GM12878 (cell line): ENCODE measurements at regions of chr1 and their contacts with region 1.

Region 1: DNA sequence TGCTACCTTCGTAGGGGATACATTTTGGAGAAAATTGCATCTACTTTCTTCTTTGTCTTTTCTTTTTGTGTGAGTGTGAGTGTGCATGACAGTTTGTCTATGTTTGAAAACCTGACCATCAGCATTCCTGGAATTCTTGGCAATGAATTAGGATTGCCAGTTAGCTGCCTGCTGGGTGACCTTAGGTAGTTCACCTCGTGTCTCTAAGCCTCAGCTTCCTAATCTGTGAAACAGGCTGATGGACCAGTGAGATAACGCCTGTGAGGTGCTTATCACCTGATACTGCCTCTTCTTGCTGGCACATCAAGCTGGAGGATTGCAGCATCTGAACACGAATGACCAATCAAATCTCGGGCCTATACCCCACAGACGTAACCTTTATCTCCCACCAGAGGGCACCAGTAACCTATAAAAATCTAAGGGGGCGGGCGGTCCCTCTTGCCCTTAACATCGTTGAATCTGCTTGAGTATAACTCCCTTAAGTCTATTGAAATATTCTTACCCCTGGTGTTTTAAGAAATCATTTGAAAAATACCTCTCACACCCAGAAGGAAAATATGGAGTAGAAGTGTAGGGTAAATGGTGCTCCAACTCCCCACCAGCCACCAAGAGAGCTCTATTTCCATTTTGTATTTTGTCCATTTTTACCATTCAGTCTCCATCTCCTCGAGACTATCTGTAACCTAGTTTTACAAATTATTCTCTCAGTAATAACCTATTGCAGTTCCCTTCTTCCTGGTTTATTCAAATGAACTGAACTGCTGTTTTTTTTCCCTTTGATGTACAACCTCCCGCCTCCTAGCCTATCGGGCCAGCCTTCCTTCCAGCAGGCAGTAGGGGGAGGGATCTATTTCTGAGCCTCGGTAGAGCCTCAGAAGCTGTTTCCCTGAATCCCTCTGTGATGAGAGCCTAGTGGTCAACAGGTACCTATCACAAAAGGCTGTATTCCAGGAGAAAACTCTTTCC is 49.7 kb downstream of the MDM4 start:
- DNase-seq: no peak
- ATAC-seq: peak; percentile 87
- H3K4me3 ChIP-seq: no peak overlapping the region
- H3K27ac ChIP-seq: peak overlapping the region; percentile 45
- H3K4me1 ChIP-seq: peaks cover 24% of the 10 kb centered on the region
- H3K27me3 ChIP-seq: no peaks in the 10 kb centered on the region
- CTCF ChIP-seq: peak; percentile 58 to 78 (median 72)
- EP300 ChIP-seq: no peak
- POLR2A ChIP-seq: no peak
- RAD21 ChIP-seq: peak; percentile 78

Region 2: DNA sequence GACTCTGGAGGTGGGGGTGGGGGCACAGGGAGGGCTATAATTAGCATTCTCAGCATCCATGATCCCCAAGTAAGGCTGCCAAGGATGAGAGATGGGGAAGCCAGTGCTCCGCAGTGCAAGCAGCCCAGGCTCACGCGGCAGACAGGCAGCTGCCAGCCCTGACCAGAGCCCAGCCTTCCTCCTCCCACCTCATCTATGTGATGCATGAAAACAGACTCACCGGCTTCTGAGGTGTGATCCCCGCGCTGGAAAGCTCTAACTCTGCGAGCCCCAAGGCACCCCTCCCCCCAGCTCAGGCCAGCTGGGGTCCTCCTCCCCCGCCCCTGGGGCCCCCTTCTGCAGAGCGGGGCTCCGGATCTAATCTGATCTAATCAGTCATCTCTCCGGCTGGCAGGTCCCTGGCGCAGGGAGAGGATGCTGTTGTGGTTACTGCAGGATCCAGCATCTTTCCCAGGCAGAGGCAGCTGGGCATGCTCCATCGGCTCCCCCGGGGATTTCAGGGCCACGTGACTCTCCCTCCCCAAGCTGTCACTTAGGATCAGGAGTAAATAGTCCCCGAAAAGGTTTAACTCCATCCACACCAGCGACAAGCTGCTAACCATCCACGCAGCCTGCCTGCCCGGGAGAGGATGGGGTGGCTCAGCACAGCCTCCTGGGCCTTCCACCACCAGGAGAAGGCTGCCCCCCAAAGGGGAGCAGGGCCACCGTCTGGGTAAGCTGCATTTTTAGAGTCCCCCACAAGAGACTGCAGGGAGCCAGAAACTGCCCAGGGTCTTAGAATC is 206.2 kb before region 1 on chr1 and contains the start of gene PLEKHA6:
- CTCF ChIA-PET with region 1: no interaction called
- POLR2A ChIA-PET with region 1: no interaction called
- RAD21 ChIA-PET with region 1: no interaction called
- SMC1A ChIA-PET with region 1: no interaction called
- in situ Hi-C with region 1: no loop called
- intact Hi-C with region 1: no loop called
- DNase-seq: no peak
- ATAC-seq: peak; percentile 15
- H3K4me3 ChIP-seq: no peak within 1 kb of the TSS
- H3K27ac ChIP-seq: no peak within 1 kb of the TSS
- H3K4me1 ChIP-seq: peaks cover 11% of the 10 kb centered on the region
- H3K27me3 ChIP-seq: peaks cover 0 to 2% of the 10 kb centered on the region in 2 experiments; a peak in 2 of 4 replicates
- CTCF ChIP-seq: no peak
- EP300 ChIP-seq: no peak
- POLR2A ChIP-seq: no peak
- RAD21 ChIP-seq: no peak
- polyA plus RNA-seq, gene PLEKHA6: not detected

Region 3: DNA sequence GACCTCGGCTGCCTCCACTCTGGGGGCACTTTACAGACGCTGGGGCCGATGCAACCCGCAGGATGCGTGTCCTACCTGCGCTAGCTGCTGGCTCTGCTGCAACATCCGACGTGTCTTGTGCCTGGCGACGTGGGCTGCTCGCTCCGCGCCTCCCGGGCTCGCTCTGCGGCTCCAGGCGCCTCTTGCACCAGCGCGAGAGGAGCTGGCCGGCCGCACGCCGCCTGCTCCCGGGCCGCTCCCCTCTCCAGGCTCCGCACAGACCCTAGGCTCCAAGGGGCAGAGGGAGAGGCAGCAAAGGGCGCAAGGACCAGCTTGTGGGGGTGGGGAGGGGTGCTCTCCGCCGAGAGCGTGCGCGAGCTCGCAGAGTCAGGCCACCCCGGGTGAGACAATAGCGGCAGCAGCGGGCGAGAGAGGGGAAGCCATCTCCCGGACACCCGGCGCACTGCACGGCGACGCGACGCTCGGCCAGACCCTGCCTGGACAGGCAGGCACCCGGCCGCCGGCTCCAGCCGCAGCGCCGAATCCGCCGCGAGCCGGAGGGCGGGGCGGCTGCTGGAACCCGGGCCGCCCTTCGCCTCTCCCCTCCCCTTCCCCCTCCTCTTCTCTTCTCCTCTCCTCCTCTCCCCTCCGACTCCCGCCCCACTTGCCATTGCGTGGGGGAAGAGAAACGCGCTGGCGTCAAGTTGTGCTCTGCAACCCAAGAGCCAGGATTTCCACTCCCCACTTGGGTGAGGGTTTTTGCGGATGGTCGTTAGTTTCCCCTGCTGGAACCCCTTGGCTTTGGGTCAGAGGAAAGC is 71.4 kb before region 1 on chr1 and contains the start of gene PIK3C2B:
- CTCF ChIA-PET with region 1: no interaction called
- POLR2A ChIA-PET with region 1: no interaction called
- RAD21 ChIA-PET with region 1: no interaction called
- SMC1A ChIA-PET with region 1: no interaction called
- in situ Hi-C with region 1: no loop called
- intact Hi-C with region 1: no loop called
- DNase-seq: peak; percentile 55
- ATAC-seq: peak; percentile 92
- H3K4me3 ChIP-seq: peak within 1 kb of the TSS; percentile 92
- H3K27ac ChIP-seq: peak within 1 kb of the TSS; percentile 86
- H3K4me1 ChIP-seq: peaks cover 22% of the 10 kb centered on the region
- H3K27me3 ChIP-seq: no peaks in the 10 kb centered on the region
- CTCF ChIP-seq: peak; percentile 37 to 59 (median 43)
- EP300 ChIP-seq: no peak
- POLR2A ChIP-seq: peak; percentile 86
- RAD21 ChIP-seq: peak; percentile 47
- polyA plus RNA-seq, gene PIK3C2B: 2.2 to 5.0 TPM

Region 4: GRCh38 chr1:204530932-204531331 is 35.0 kb before region 1 on chr1:
- CTCF ChIA-PET with region 1: interaction called, 10 read pairs
- POLR2A ChIA-PET with region 1: interaction called, 3 read pairs
- RAD21 ChIA-PET with region 1: interaction called, 9 read pairs
- SMC1A ChIA-PET with region 1: interaction called, 9 read pairs
- in situ Hi-C with region 1: no loop called
- intact Hi-C with region 1: no loop called
- DNase-seq: peak; percentile 87
- ATAC-seq: peak; percentile 96
- H3K4me3 ChIP-seq: no peak overlapping the region
- H3K27ac ChIP-seq: peak overlapping the region; percentile 59
- H3K4me1 ChIP-seq: peaks cover 23% of the 10 kb centered on the region
- H3K27me3 ChIP-seq: no peaks in the 10 kb centered on the region
- CTCF ChIP-seq: no peak
- EP300 ChIP-seq: peak in 1 of 2 experiments; percentile 94; a peak in 2 of 4 replicates
- POLR2A ChIP-seq: no peak
- RAD21 ChIP-seq: no peak

Region 5: GRCh38 chr1:204623894-204624361 is 58.0 kb after region 1 on chr1:
- CTCF ChIA-PET with region 1: interaction called, 17 read pairs
- POLR2A ChIA-PET with region 1: no interaction called
- RAD21 ChIA-PET with region 1: interaction called, 5 read pairs
- SMC1A ChIA-PET with region 1: interaction called, 5 read pairs
- in situ Hi-C with region 1: no loop called
- intact Hi-C with region 1: no loop called
- DNase-seq: no peak
- ATAC-seq: peak; percentile 76
- H3K4me3 ChIP-seq: no peak overlapping the region
- H3K27ac ChIP-seq: no peak overlapping the region
- H3K4me1 ChIP-seq: no peaks in the 10 kb centered on the region
- H3K27me3 ChIP-seq: no peaks in the 10 kb centered on the region; a peak in 1 of 4 replicates
- CTCF ChIP-seq: peak; percentile 8 to 39 (median 19); a peak in 4 of 6 replicates
- EP300 ChIP-seq: no peak
- POLR2A ChIP-seq: no peak
- RAD21 ChIP-seq: 0 out of 2 replicates have a peak, but pooled peaks have one; percentile 5

Region 6: GRCh38 chr1:204746838-204747442 is 181.0 kb after region 1 on chr1:
- CTCF ChIA-PET with region 1: interaction called, 7 read pairs
- POLR2A ChIA-PET with region 1: no interaction called
- RAD21 ChIA-PET with region 1: interaction called, 8 read pairs
- SMC1A ChIA-PET with region 1: no interaction called
- in situ Hi-C with region 1: no loop called
- intact Hi-C with region 1: loop called (anchors 5 kb)
- DNase-seq: no peak
- ATAC-seq: peak; percentile 94
- H3K4me3 ChIP-seq: no peak overlapping the region
- H3K27ac ChIP-seq: no peak overlapping the region
- H3K4me1 ChIP-seq: no peaks in the 10 kb centered on the region
- H3K27me3 ChIP-seq: peaks cover 0 to 1% of the 10 kb centered on the region in 2 experiments; a peak in 1 of 4 replicates
- CTCF ChIP-seq: peak; percentile 78 to 97 (median 97)
- EP300 ChIP-seq: no peak
- POLR2A ChIP-seq: no peak
- RAD21 ChIP-seq: peak; percentile 48

Region 7: GRCh38 chr1:204941421-204942338 is 375.8 kb after region 1 on chr1:
- CTCF ChIA-PET with region 1: no interaction called
- POLR2A ChIA-PET with region 1: no interaction called
- RAD21 ChIA-PET with region 1: interaction called, 3 read pairs
- SMC1A ChIA-PET with region 1: no interaction called
- in situ Hi-C with region 1: no loop called
- intact Hi-C with region 1: loop called (anchors 10 kb)
- DNase-seq: no peak
- ATAC-seq: peak; percentile 88
- H3K4me3 ChIP-seq: no peak overlapping the region
- H3K27ac ChIP-seq: no peak overlapping the region
- H3K4me1 ChIP-seq: no peaks in the 10 kb centered on the region
- H3K27me3 ChIP-seq: peaks cover 0 to 6% of the 10 kb centered on the region in 2 experiments; a peak in 3 of 4 replicates
- CTCF ChIP-seq: peak; percentile 81 to 95 (median 91)
- EP300 ChIP-seq: no peak
- POLR2A ChIP-seq: no peak
- RAD21 ChIP-seq: peak; percentile 51

Region 8: DNA sequence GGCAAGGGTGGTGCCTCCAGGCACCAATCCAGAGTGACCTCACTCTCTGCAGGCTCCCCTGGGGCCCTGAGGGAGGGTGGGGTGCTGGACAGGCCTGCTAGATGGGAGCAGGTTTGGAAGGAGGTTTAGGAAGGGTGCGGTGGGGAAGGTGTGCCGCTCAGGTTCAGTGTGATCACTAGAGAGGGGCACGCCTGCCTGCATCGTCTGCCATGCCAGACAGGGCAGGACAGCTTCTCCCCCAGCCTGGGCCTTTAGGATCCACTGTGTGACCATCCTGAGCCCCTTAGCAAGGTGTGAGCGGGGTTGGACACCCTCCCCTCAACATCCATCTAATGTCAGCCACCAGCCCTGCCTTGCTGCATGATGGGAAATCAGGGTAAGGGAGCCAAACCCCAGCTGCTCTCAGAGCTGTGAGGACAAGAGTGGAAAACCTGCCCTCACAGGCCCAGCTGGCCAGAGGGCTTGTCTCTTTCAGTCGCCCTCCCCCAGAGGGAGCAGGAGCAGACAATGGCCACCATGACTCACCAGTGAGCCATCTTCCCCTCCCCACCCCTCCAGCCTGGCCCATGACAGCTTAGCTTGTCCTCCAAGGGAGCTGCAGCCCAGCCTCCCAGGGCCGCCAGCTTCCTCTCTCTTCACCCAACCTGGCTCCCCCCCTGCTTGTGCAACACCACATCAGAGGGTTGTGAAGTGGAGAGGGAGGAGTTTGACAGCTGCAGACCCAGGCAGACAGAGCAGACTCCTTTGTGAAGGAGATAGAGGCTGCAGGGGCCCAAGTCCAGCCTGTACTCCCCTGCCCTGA is 718.6 kb after region 1 on chr1:
- CTCF ChIA-PET with region 1: no interaction called
- POLR2A ChIA-PET with region 1: no interaction called
- RAD21 ChIA-PET with region 1: no interaction called
- SMC1A ChIA-PET with region 1: no interaction called
- in situ Hi-C with region 1: no loop called
- intact Hi-C with region 1: no loop called
- DNase-seq: no peak
- ATAC-seq: peak; percentile 61
- H3K4me3 ChIP-seq: 0 out of 2 replicates have a peak overlapping the region, but pooled peaks have one; percentile 32
- H3K27ac ChIP-seq: no peak overlapping the region
- H3K4me1 ChIP-seq: peaks cover 64% of the 10 kb centered on the region
- H3K27me3 ChIP-seq: no peaks in the 10 kb centered on the region; a peak in 1 of 4 replicates
- CTCF ChIP-seq: 0 out of 6 replicates have a peak, but pooled peaks of 1 of the 3 experiments have one; percentile 0
- EP300 ChIP-seq: peak; percentile 33 to 42; a peak in 1 of 4 replicates
- POLR2A ChIP-seq: 0 out of 2 replicates have a peak, but pooled peaks have one; percentile 29
- RAD21 ChIP-seq: no peak